ENCODE measurements at regions of chr6 and their contacts with region 1.

Region 1: GRCh38 chr6:43891072-43891870 is 121.3 kb downstream of the VEGFA start:
- DNase-seq: no peak
- ATAC-seq: peak; percentile 4; the same call in 2 of the 3 replicates
- H3K4me3 ChIP-seq: peak overlapping the region in 2 of 3 experiments; percentile 4 to 39; a peak in 2 of 6 replicates
- H3K27ac ChIP-seq: no peak overlapping the region
- H3K4me1 ChIP-seq: peaks cover 67% of the 10 kb centered on the region
- H3K27me3 ChIP-seq: peaks cover 2 to 20% of the 10 kb centered on the region in 2 experiments; a peak in 4 of 5 replicates
- CTCF ChIP-seq: no peak
- EP300 ChIP-seq: no peak
- POLR2A ChIP-seq: no peak
- RAD21 ChIP-seq: no peak

Region 2: GRCh38 chr6:43856005-43856765 is 35.1 kb before region 1 on chr6:
- CTCF ChIA-PET with region 1: no interaction called
- POLR2A ChIA-PET with region 1: no interaction called
- in situ Hi-C with region 1: no loop called
- intact Hi-C with region 1: loop called (anchors 5 kb)
- DNase-seq: peak; percentile 86
- ATAC-seq: peak; percentile 91
- H3K4me3 ChIP-seq: no peak overlapping the region
- H3K27ac ChIP-seq: no peak overlapping the region
- H3K4me1 ChIP-seq: peaks cover 85% of the 10 kb centered on the region
- H3K27me3 ChIP-seq: peaks cover 3 to 4% of the 10 kb centered on the region in 2 experiments; a peak in 1 of 5 replicates
- CTCF ChIP-seq: peak; percentile 99
- EP300 ChIP-seq: peak in 1 of 2 experiments; percentile 20; a peak in 1 of 4 replicates
- POLR2A ChIP-seq: no peak
- RAD21 ChIP-seq: peak; percentile 96